HAP-1 (cell line): ENCODE measurements at regions of chr17 and their contacts with region 1.

Region 1: DNA sequence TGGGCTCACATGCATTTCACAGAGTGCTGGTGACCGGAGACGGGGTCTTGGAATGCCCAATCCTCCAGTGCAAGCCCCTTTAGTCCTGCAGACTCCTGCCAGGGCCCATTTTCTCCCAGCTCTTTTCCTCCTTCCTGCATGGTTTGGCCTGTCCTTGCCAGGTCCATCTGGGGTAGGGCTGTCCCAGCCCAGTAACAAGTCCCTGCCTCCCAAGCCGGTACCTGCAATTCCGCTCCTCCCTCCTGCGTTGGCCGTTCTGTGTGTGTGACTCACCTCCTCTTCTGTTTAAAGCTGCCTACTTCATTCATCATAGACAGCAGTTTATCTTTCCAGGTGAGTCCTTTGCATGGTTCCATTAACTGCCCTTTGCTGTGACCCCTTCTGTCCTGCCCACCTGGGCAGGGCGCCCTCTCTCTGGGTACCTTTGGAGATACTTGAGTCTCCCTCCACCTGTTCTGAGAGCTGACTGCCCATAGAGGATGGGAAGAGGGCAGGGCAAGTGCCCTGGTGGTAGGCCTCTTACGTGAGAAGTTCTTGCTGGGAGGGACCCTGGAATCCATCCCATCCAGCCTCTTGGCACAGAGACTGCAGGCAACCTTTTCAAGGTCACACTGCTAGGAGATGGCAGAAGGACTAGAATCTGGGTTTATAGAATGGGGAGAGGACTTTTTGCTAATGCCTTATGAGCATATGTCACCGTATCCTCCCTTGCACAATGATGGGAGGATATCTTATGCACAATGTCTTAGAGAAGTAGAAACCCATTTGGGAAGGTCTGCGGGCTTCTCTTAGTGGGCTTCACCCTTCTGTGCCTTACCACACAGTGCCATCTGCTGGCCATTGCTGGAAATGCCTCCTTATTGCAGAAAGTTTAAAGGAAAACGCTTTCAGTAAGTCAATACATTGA is 29.7 kb upstream of the LGALS9 start:
- DNase-seq: peak; percentile 68 to 90
- H3K4me3 ChIP-seq: no peak overlapping the region
- H3K4me1 ChIP-seq: no peaks in the 10 kb centered on the region
- H3K27me3 ChIP-seq: no peaks in the 10 kb centered on the region

Region 2: DNA sequence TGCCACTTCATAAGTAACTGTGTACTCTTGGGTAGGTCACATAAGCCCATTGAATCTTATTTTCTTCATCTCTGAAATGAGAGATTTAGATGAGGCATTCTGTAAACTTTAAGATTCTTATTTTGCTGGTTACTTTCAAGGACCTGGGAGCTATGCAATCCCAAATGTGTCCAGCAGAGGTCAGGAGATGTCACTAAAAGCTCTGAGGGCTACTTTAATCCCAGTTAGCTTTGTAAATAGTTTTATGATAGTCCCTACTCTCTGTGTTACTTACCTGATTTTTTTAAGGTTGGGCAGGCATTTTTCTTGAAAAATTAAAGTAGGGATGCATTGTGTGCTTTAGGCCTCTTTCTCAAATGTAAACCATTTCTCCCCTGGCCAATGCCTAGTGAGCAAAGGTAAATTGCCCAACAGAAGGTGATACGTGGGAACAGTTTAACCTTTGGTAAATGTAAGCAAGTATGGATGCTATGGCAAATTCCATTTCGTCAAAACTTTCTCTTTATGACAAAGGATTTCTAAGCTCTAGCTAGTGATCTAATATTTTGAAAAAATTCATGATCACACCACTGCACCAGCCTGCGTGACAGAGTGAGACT is 364.5 kb before region 1 on chr17:
- in situ Hi-C with region 1: loop called (anchors 5 kb)
- DNase-seq: peak; percentile 52 to 84
- H3K4me3 ChIP-seq: no peak overlapping the region
- H3K4me1 ChIP-seq: no peaks in the 10 kb centered on the region
- H3K27me3 ChIP-seq: no peaks in the 10 kb centered on the region

Region 3: GRCh38 chr17:27353461-27354050 is 247.8 kb before region 1 on chr17:
- in situ Hi-C with region 1: loop called (anchors 5 kb)
- DNase-seq: peak; percentile 93
- H3K4me3 ChIP-seq: peak overlapping the region; percentile 90
- H3K4me1 ChIP-seq: peaks cover 15% of the 10 kb centered on the region
- H3K27me3 ChIP-seq: no peaks in the 10 kb centered on the region

Region 4: DNA sequence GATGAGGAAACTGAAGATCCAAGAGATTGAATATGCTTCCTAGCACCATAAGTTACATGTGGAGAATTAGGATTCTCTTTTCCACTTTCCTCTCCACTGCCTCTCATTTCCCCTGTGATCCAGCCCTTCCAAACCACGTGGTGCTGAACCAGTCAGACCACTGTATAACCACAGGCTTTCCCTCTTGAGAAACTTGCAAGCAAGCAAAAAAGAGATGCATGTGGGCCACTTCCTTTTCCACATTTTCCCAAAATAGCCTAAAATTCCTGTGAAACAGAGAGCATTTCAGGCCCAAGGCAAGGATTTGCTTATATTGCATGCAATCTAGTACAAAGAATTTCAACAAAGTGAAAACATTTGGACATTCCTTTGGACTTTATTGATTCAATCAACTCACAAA is 204.4 kb before region 1 on chr17:
- in situ Hi-C with region 1: loop called (anchors 10 kb)
- DNase-seq: no peak
- H3K4me3 ChIP-seq: no peak overlapping the region
- H3K4me1 ChIP-seq: no peaks in the 10 kb centered on the region
- H3K27me3 ChIP-seq: peaks cover 9% of the 10 kb centered on the region; the same call in 1 of the 2 replicates

Region 5: GRCh38 chr17:27455914-27456680 is 145.2 kb before region 1 on chr17 and contains the start of gene KSR1:
- in situ Hi-C with region 1: loop called (anchors 5 kb)
- DNase-seq: peak; percentile 73 to 90
- H3K4me3 ChIP-seq: peak within 1 kb of the TSS; percentile 60
- H3K4me1 ChIP-seq: peaks cover 12% of the 10 kb centered on the region
- H3K27me3 ChIP-seq: no peaks in the 10 kb centered on the region

Region 6: GRCh38 chr17:27666831-27667560 is 65.7 kb after region 1 on chr17:
- in situ Hi-C with region 1: no loop called
- DNase-seq: no peak
- H3K4me3 ChIP-seq: no peak overlapping the region
- H3K4me1 ChIP-seq: no peaks in the 10 kb centered on the region
- H3K27me3 ChIP-seq: no peaks in the 10 kb centered on the region

Region 7: DNA sequence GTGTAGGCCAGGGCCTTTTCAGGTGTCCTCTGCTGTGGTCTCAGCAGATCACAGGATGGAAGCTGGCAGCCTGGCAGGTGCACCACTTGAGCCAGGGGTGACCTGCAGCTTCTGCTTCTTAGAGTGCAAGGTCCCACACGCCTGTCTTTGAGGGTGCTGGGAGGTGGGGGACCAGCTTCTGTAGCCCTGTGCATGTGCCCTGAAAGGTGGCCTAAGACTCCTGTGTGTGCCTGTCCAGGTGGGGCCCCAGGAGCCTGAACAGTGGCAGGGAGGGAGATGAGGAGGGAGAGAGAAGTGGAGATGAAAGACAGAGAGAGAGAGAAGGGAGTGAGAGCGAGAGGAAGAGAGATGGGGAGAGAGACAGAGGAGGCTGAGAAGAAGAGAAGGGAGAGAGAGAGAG is 75.9 kb after region 1 on chr17:
- in situ Hi-C with region 1: no loop called
- DNase-seq: no peak
- H3K4me3 ChIP-seq: no peak overlapping the region
- H3K4me1 ChIP-seq: no peaks in the 10 kb centered on the region
- H3K27me3 ChIP-seq: no peaks in the 10 kb centered on the region

Region 8: DNA sequence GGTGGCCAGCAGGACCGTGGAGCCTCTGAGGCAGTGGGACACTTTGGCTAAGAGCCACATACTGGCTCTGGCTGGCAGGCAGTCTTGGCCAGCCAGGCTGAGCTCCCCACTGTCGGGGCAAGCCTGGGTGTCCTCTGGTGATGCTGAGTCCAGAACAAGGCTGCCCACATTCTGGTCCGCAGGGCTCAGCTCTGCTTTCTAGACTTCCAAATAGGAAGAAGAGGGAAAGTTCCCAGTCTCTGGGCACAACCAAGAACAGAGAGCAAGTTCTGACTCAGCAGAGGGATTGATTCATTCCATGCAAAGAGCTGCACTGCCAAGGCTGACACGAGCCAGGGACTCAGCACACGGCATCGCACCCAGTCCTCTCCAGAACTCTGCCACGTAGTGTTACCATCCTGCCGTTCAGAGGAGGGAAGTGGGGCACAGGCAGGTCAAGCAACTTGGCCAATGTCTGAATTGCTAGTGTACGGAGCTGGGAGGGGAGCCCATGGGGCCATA is 140.1 kb after region 1 on chr17:
- in situ Hi-C with region 1: no loop called
- DNase-seq: no peak
- H3K4me3 ChIP-seq: no peak overlapping the region
- H3K4me1 ChIP-seq: no peaks in the 10 kb centered on the region
- H3K27me3 ChIP-seq: no peaks in the 10 kb centered on the region